Posterior vena cava (tissue), 2 donors: ENCODE measurements at regions of chr7 and their contacts with region 1.

Region 1: GRCh38 chr7:104431930-104432329 is 103.5 kb downstream of the LHFPL3 start:
- DNase-seq: no peak

Region 2: GRCh38 chr7:104089612-104090011 is 342.3 kb before region 1 on chr7:
- intact Hi-C with region 1: loop called in 1 of 2 experiments (anchors 5 kb)
- DNase-seq: no peak